ENCODE measurements at regions of chr19 and their contacts with region 1.

Region 1: GRCh38 chr19:18697680-18698079 is 14.2 kb downstream of the CRTC1 start:
- DNase-seq: no peak
- H3K4me3 ChIP-seq: no peak overlapping the region
- H3K27ac ChIP-seq: no peak overlapping the region
- H3K4me1 ChIP-seq: peaks cover 12% of the 10 kb centered on the region; the same call in 1 of the 2 replicates
- H3K27me3 ChIP-seq: no peaks in the 10 kb centered on the region
- CTCF ChIP-seq: no peak

Region 2: DNA sequence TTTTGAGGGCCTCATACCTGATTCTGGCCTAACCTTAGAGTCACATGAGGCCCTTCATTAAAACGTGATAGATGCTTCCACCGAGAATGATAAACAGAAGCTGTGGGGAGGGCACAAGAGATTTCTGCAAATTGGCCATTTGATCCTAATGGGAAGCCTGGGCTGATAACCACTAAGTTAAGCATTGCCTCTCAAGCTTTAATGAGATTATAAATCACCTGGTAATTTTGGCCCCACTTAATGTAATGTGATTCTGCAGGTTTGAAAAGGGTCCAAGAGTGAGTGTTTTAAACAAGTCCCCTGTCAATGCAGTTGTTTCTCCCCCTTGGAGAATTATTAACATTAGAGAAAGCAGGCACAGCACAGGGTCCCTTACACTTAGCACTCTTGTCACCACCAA is 1511.4 kb after region 1 on chr19:
- CTCF ChIA-PET with region 1: no interaction called
- POLR2A ChIA-PET with region 1: interaction called, 16 read pairs
- intact Hi-C with region 1: no loop called
- DNase-seq: no peak
- H3K4me3 ChIP-seq: no peak overlapping the region
- H3K27ac ChIP-seq: no peak overlapping the region
- H3K4me1 ChIP-seq: no peaks in the 10 kb centered on the region
- H3K27me3 ChIP-seq: no peaks in the 10 kb centered on the region
- CTCF ChIP-seq: no peak

Measured in PC-9 (cell line).